Ovary (tissue), 10 donors: ENCODE measurements at regions of chr2 and their contacts with region 1.

Region 1: DNA sequence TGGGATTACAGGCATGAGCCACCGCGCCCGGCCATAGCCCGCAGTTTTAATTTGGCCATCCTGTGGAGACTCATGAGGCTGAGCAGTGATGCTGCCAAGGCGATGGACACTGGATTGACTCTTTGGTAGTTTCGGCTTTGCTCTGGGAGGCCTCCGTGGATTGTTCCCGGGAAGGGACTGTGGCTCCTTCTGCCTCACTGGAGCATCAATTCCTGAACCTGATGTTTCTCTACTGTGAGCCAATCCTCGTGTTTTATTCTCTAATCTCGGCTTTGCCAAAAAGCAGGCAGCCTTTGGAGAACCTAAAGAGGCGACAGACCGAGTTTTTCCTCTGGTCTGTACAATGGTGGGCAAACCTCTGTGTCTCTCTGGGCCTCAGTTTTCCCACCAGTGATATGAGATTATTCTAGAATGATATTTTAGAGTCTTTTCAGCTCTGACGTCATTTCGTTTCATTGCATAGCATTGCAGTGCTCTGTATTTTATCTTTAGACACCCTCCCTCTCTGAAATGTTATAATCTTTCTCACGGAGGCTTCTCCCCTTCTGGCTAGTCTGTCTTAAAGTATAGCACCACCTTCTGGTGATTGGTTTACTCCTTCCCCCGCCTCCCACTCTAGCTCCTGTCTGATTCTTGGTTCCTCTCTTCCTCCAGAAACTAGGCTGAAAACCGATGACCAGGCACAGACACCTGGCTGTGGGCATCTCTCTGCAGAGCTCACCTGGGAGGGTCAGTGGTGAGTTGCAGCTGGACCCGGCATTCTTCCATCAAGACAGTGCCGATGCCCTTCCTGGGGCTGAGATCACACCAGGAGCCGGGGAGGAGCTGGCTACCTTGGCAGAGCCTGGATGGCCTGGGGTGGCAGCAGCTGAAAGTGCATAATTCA is 341.3 kb downstream of the MYCN start:
- DNase-seq: peak in 2 of 5 donors; percentile 13 to 25
- H3K4me3 ChIP-seq: no peak overlapping the region
- H3K27ac ChIP-seq: no peak overlapping the region
- H3K4me1 ChIP-seq: peaks cover 5% of the 10 kb centered on the region
- H3K27me3 ChIP-seq: no peaks in the 10 kb centered on the region
- CTCF ChIP-seq: peak in 1 of 3 donors; percentile 24
- EP300 ChIP-seq: no peak
- POLR2A ChIP-seq: no peak

Region 2: GRCh38 chr2:14272396-14273075 is 2009.2 kb before region 1 on chr2:
- intact Hi-C with region 1: loop called in 1 of 4 experiments (anchors 5 kb)
- DNase-seq: no peak
- H3K4me3 ChIP-seq: no peak overlapping the region
- H3K27ac ChIP-seq: no peak overlapping the region
- H3K4me1 ChIP-seq: no peaks in the 10 kb centered on the region
- H3K27me3 ChIP-seq: no peaks in the 10 kb centered on the region
- CTCF ChIP-seq: no peak
- EP300 ChIP-seq: no peak
- POLR2A ChIP-seq: no peak

Region 3: DNA sequence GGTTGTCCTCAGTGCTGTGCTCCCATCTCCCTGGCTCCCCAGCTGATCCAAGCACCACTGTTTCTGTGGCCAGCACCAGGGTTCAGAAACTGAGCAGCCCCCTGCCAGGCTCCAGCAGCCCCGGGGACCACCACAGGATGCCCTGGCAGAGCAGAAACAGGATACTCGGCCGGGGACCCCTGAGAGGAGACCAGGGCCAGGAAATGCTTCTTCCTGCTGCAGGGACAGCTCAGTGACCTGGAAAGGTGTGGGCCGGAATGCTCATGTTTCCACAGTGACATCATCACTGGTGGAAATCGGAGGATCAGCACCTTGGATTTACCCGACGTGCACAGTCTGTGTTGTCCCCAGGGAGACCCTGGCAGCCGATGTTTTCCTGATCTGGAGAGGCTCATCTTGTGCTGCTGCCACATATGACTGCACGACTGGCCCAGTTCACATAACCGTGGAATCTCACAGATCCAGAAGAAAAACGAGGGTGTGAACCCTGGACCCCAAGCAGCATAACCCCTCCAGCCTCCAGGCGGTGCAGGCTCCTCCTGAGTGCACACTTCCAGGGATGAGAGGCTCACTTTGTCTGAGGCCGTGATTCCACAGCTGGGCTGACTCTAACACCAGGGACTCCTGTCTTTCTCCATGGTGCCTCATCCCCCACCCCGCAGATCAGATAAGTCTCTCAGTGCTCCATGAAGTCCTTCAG is 632.0 kb before region 1 on chr2:
- intact Hi-C with region 1: loop called in 1 of 4 experiments (anchors 10 kb)
- DNase-seq: no peak
- H3K4me3 ChIP-seq: no peak overlapping the region
- H3K27ac ChIP-seq: no peak overlapping the region
- H3K4me1 ChIP-seq: no peaks in the 10 kb centered on the region
- H3K27me3 ChIP-seq: no peaks in the 10 kb centered on the region
- CTCF ChIP-seq: no peak
- EP300 ChIP-seq: no peak
- POLR2A ChIP-seq: no peak

Region 4: GRCh38 chr2:15939854-15940660 is 341.6 kb before region 1 on chr2 and contains the start of gene MYCN:
- intact Hi-C with region 1: loop called in 1 of 4 experiments (anchors 2 kb)
- DNase-seq: peak; percentile 52 to 72 (median 56)
- H3K4me3 ChIP-seq: peak within 1 kb of the TSS; percentile 44
- H3K27ac ChIP-seq: no peak within 1 kb of the TSS
- H3K4me1 ChIP-seq: no peaks in the 10 kb centered on the region
- H3K27me3 ChIP-seq: no peaks in the 10 kb centered on the region
- CTCF ChIP-seq: peak in 1 of 3 donors; percentile 27
- EP300 ChIP-seq: no peak
- POLR2A ChIP-seq: no peak
- total RNA-seq, gene MYCN: 1.2 to 7.0 (median 2.1) TPM

Region 5: DNA sequence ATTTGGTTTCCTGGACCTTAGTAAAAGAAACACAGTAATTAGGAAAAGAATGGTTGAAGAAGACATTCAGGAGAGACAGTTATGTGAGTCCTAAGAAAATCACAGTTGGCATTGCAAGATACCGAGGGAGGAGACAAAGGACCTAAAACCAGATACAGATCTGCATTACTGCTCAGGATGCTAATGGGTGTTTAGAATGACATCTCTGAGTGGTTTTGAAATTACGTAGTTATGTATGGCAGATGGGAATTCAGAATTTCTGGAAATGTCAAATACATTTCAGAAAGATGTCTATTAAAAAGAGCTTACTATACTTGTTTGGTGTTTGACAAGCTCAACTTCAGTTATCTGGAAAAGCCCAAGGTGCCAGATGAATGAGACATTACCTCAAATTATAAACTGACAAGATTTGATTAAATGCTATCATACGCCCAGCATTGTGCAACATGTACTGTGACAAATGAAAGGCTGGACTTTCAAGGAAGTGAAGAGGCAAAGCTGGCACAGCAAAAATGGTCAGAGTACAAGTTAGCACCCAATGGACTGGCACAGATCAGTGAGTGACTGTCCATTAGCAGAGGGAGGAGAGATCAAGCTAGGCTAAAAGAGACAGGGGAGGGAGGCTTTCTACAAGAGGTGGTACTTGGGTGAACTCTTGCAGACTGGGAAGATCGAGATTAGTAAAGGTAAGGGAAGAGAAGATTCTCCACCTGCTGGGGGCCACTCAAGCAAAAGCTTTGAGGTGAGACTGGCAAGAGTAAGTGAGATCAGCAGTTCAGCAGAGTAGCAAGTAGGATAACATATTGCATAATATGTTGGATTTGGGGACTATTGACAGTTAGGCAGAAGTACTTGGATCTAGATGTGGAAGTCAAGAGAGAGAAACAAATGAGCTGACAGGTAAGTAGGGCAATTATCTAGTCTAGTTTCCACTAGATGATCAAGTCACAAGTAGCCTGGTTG is 215.0 kb after region 1 on chr2:
- intact Hi-C with region 1: no loop called
- DNase-seq: no peak
- H3K4me3 ChIP-seq: no peak overlapping the region
- H3K27ac ChIP-seq: no peak overlapping the region
- H3K4me1 ChIP-seq: no peaks in the 10 kb centered on the region
- H3K27me3 ChIP-seq: no peaks in the 10 kb centered on the region
- CTCF ChIP-seq: no peak
- EP300 ChIP-seq: no peak
- POLR2A ChIP-seq: no peak